T-cell (primary cell): ENCODE measurements at regions of chr11 and their contacts with region 1.

Region 1: GRCh38 chr11:111586388-111586831 is 15.8 kb upstream of the SIK2 start:
- DNase-seq: peak in 28 of 35 experiments; percentile 6 to 78 (median 40)
- ATAC-seq: peak; percentile 61 to 75 (median 63)
- H3K4me3 ChIP-seq: no peak overlapping the region
- H3K4me3 Mint-ChIP-seq: no peak overlapping the region
- H3K27ac ChIP-seq: no peak overlapping the region
- H3K27ac Mint-ChIP-seq: no peak overlapping the region
- H3K4me1 ChIP-seq: peaks cover 0 to 4% of the 10 kb centered on the region in 2 experiments
- H3K4me1 Mint-ChIP-seq: no peaks in the 10 kb centered on the region
- H3K27me3 ChIP-seq: no peaks in the 10 kb centered on the region
- H3K27me3 Mint-ChIP-seq: peaks cover 3 to 4% of the 10 kb centered on the region in 2 donors

Region 2: GRCh38 chr11:111604392-111605009 is 18.1 kb after region 1 on chr11:
- CTCF ChIA-PET with region 1: interaction called, 5 to 12 read pairs
- POLR2A ChIA-PET with region 1: no interaction called
- DNase-seq: peak in 1 of 35 experiments; percentile 56
- ATAC-seq: no peak
- H3K4me3 ChIP-seq: no peak overlapping the region
- H3K4me3 Mint-ChIP-seq: peak overlapping the region in 2 of 3 donors; percentile 84 to 100
- H3K27ac ChIP-seq: no peak overlapping the region
- H3K27ac Mint-ChIP-seq: no peak overlapping the region
- H3K4me1 ChIP-seq: peaks cover 11 to 21% of the 10 kb centered on the region in 2 experiments
- H3K4me1 Mint-ChIP-seq: peaks cover 26 to 35% (median 29%) of the 10 kb centered on the region in 3 donors
- H3K27me3 ChIP-seq: no peaks in the 10 kb centered on the region
- H3K27me3 Mint-ChIP-seq: no peaks in the 10 kb centered on the region

Region 3: DNA sequence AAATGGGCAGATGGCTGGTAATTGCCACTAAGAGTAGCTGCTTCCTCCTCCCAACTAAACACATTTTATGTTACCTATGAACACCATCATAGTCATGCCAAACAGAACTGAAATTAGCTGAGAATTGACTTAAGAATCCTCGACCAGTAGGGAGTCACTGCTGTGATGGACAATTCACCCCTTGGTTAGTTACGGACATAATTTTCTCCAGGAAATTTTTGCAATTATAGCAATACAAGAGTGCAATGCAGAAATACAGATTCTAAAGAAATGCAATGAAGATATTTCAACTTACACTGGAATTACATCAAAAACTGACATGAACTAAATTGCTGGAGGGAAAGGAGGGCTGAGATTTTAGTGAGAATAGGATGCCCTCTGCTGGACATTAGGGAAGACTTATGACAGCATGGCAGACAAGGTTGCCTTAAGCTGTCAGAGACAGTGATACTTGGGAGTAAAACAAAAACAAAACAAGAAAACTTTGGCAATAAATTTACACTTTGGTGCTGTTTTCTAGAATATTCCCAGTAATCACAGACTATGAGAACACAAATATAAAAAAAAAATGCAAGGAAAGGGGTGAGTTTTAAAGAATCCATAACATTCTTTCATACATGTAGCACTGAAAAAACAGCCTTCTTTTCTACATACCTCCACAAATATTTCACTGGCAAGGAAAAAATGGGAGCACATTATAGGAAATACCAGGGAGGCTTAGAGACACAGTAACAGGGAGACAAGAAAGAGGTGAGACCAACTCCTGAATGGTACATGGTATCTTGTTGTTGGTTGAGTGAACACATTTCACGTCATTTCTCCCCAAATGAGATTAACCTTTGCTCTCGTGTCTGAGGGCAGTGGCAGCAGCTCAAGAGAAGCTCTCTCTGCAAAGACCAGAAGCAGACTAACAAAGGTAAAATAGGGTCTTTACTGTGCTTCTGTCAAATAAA is 191.0 kb after region 1 on chr11:
- CTCF ChIA-PET with region 1: interaction called, 19 to 50 read pairs
- POLR2A ChIA-PET with region 1: no interaction called
- DNase-seq: peak in 14 of 35 experiments; percentile 4 to 78 (median 10)
- ATAC-seq: peak; percentile 72 to 88 (median 80)
- H3K4me3 ChIP-seq: no peak overlapping the region
- H3K4me3 Mint-ChIP-seq: no peak overlapping the region
- H3K27ac ChIP-seq: no peak overlapping the region
- H3K27ac Mint-ChIP-seq: no peak overlapping the region
- H3K4me1 ChIP-seq: no peaks in the 10 kb centered on the region
- H3K4me1 Mint-ChIP-seq: peaks cover 0 to 3% (median 0%) of the 10 kb centered on the region in 3 donors
- H3K27me3 ChIP-seq: no peaks in the 10 kb centered on the region
- H3K27me3 Mint-ChIP-seq: no peaks in the 10 kb centered on the region

Region 4: GRCh38 chr11:113363406-113363805 is 1777.0 kb after region 1 on chr11:
- CTCF ChIA-PET with region 1: no interaction called
- POLR2A ChIA-PET with region 1: no interaction called
- DNase-seq: no peak
- ATAC-seq: no peak
- H3K4me3 ChIP-seq: no peak overlapping the region
- H3K4me3 Mint-ChIP-seq: no peak overlapping the region
- H3K27ac ChIP-seq: no peak overlapping the region
- H3K27ac Mint-ChIP-seq: peak overlapping the region; percentile 10 to 56
- H3K4me1 ChIP-seq: peaks cover 3 to 12% of the 10 kb centered on the region in 2 experiments
- H3K4me1 Mint-ChIP-seq: peaks cover 20 to 29% (median 27%) of the 10 kb centered on the region in 3 donors
- H3K27me3 ChIP-seq: no peaks in the 10 kb centered on the region
- H3K27me3 Mint-ChIP-seq: no peaks in the 10 kb centered on the region